HEK293 (cell line): ENCODE measurements at regions of chr17 and their contacts with region 1.

Region 1: GRCh38 chr17:73657473-73658116 is 13.3 kb upstream of the SDK2 start:
- H3K4me3 ChIP-seq: no peak overlapping the region
- H3K27ac ChIP-seq: no peak overlapping the region
- H3K4me1 ChIP-seq: no peaks in the 10 kb centered on the region
- CTCF ChIP-seq: peak; percentile 68

Region 2: DNA sequence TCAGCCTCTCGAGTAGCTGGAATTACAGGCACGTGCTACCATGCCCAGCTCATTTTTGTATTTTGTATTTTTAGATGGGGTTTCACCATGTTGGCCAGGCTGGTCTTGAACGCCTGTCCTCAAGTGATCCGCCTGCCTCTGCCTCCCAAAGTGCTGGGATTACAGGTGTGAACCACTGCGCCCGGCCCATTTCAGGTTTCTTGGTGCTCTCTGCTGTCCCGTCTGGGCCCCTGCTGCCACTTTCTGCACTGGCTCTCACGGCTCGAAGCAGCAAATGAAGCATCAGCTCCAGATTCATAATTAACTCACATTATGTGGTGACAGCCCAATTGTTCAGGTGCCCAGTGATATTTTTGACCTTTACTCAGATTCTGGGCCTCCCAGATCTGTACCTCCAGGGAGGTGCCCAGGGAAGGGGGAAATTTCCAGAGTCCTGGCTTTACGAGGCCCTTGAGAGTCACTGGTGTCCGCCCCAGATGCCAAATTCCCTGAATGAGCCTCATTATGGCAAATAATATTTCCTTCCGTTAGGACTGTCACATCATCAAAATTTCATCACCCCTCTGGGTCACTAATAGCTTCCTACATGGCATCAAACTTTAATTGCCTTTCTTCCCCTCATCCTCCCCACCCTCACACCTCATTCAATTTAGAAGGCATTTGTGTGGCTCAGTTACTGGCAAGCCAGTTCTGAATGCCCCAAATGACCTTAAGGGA is 22.3 kb before region 1 on chr17:
- CTCF ChIA-PET with region 1: no interaction called
- POLR2A ChIA-PET with region 1: no interaction called
- H3K4me3 ChIP-seq: no peak overlapping the region
- H3K27ac ChIP-seq: no peak overlapping the region
- H3K4me1 ChIP-seq: peaks cover 4% of the 10 kb centered on the region; the same call in 1 of the 2 replicates
- CTCF ChIP-seq: no peak

Region 3: DNA sequence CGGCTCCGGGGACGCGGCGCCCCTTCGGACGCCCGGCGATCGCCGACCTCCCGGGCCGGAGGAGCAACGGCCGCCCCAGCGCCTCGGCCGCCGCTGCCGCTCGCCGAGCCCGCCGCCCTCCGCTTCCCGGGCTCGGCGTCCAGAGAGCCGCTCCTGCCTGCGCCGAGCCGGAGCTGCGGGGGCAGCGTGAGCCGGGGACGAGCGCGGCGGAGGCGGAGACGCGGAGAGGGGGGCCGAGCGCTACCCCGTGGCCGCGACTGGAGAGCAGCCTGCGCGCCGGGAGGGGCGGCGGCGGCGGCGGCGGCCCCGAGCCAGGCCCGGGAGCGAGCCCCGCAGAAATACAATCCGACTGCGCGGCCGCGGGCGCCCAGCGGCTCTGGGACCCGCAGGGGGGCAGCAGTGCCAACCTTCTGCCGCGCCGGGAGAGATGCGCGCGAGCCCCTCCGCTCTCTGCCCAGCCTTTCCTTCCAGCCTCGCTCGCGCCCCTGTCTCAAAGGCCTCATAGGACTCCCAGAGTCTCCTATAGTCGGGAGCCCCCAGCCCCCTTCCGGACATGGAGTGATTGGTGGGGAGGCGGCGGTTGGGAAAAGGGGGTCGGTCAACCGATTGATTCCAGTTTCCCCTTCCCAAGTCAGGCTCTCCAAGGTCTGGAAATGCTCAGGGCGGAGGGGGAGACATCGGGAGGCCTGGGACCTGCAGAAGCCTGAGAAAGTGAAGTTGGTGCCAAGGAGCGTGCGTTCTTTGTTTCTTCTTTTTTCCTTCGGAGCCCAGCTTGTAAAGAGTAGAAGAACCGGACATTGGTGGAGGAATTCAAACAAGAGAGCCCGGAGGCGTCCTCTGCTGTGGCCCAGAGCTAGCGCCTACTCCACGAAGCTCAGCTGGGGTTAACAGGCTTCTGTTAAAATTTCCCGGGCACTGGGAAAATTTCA is 12.3 kb before region 1 on chr17:
- CTCF ChIA-PET with region 1: interaction called, 13 read pairs
- POLR2A ChIA-PET with region 1: no interaction called
- H3K4me3 ChIP-seq: peak overlapping the region; percentile 49
- H3K27ac ChIP-seq: peak overlapping the region; percentile 18; the same call in 1 of the 2 replicates
- H3K4me1 ChIP-seq: no peaks in the 10 kb centered on the region
- CTCF ChIP-seq: peak; percentile 61; the same call in 1 of the 2 replicates